GM13976 (cell line): ENCODE measurements at regions of chr19 and their contacts with region 1.

Region 1: GRCh38 chr19:732148-733069 is 18.5 kb upstream of the MISP start:
- DNase-seq: no peak
- CTCF ChIP-seq: no peak

Region 2: DNA sequence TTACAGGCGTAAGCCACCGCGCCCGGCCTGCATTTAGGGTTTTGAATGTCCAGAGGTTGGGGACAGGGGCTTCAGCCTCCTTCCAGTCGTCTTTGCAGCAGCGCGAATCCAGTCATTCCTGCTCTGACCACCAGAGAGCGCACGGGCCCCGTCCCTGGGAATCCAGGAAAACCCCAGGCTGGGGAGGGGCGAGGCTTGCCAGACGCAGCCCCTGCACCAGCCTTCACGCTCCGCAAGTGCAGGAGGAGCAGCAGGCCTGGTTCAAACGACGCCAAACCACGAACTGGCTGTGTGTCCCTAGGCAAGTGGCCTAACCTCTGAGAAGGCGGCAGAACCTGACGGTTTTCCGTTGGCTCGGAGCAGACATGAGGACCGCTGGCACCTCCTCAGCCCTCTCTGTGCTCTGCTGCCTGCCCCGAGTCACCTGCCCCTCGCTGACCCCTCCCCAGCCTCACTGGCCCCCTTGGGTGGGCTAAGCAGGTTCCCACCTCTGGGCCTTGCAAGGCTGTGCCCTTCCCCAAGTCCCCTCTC is 67.4 kb before region 1 on chr19:
- in situ Hi-C with region 1: loop called (anchors 5 kb)
- DNase-seq: peak; percentile 89
- CTCF ChIP-seq: peak; percentile 87

Region 3: GRCh38 chr19:813359-814257 is 81.2 kb after region 1 on chr19:
- in situ Hi-C with region 1: no loop called
- DNase-seq: no peak
- CTCF ChIP-seq: no peak